WTC11 (cell line): ENCODE measurements at regions of chr12 and their contacts with region 1.

Region 1: DNA sequence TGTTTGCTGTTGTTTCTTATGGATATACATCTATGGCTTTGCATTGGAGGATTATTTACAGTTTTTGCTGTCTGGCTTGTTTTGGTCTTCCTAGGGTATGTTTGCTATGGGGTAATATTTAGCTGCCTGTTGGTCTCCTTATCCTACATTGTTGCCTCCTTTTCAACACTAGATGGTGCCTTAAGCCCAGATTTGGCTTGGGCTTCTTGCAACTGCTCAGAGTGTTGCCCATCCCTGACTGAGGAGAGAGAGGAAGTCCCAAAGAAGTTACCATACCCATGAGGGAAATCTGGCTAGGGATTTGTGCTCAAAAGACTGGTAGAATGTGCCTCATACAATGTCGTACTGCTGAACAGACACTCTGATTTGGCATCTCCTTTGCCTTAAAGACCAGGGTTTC is 94.6 kb upstream of the MUCL1 start:
- DNase-seq: peak; percentile 43
- ATAC-seq: peak; percentile 99
- H3K4me3 Mint-ChIP-seq: no peak overlapping the region
- H3K27ac Mint-ChIP-seq: no peak overlapping the region
- H3K4me1 Mint-ChIP-seq: no peaks in the 10 kb centered on the region
- H3K27me3 Mint-ChIP-seq: no peaks in the 10 kb centered on the region
- CTCF ChIP-seq: no peak

Region 2: DNA sequence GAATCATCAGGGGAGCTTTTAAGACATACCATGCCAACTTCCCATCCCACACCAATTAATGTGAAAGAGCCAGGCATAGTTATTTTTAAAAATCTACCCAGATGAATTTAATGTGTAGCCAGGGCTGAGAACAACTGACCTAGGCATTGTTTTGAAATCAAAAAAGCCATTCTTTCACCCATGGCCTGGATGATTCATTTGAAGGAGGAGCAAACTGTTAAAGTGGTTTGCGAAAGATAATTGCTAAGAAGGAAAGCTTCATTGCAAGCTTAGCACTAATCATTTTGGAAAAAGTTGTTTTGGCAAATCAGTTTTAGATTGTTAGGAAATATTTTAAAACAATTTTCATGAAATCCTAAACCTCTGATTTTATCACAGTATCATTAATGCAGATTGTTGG is 284.2 kb before region 1 on chr12:
- CTCF ChIA-PET with region 1: no interaction called
- POLR2A ChIA-PET with region 1: no interaction called
- DNase-seq: no peak
- ATAC-seq: no peak
- H3K4me3 Mint-ChIP-seq: no peak overlapping the region
- H3K27ac Mint-ChIP-seq: no peak overlapping the region
- H3K4me1 Mint-ChIP-seq: peaks cover 13% of the 10 kb centered on the region
- H3K27me3 Mint-ChIP-seq: peaks cover 29% of the 10 kb centered on the region
- CTCF ChIP-seq: no peak

Region 3: DNA sequence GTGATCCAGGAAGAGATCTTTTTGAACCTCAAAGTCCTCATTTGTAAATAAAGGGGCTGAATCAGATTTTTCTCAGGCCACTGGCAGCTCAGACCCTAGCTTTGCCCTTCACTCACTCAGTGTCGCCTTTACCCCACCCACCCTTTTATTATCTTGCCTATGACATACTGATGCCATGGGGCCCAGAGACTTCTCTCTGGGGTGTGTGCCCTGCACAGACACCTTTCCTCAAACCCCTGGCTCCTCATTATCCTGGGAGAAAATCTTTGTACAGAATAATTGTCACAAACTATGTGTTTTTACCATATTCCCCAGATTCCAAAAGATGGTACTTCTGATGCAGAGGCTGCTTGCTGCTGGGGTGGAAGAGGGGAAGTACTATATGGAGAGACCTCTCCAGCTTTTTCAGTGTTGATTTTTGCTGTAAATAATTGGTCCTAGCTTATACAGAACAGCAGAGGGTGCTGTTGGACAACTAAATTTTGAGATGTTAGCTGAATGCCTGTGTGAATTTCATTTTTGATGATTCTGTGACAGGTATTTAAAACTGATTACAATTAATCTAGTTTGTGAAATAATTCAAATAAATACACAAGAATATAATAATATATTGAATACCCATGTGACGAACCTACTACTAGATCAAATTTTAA is 57.7 kb before region 1 on chr12:
- CTCF ChIA-PET with region 1: interaction called, 21 read pairs
- POLR2A ChIA-PET with region 1: no interaction called
- DNase-seq: no peak
- ATAC-seq: peak; percentile 69
- H3K4me3 Mint-ChIP-seq: no peak overlapping the region
- H3K27ac Mint-ChIP-seq: no peak overlapping the region
- H3K4me1 Mint-ChIP-seq: peaks cover 22% of the 10 kb centered on the region
- H3K27me3 Mint-ChIP-seq: no peaks in the 10 kb centered on the region
- CTCF ChIP-seq: peak; percentile 43

Region 4: GRCh38 chr12:54723379-54724256 is 36.1 kb before region 1 on chr12:
- CTCF ChIA-PET with region 1: interaction called, 12 read pairs
- POLR2A ChIA-PET with region 1: no interaction called
- DNase-seq: no peak
- ATAC-seq: peak; percentile 51
- H3K4me3 Mint-ChIP-seq: no peak overlapping the region
- H3K27ac Mint-ChIP-seq: no peak overlapping the region
- H3K4me1 Mint-ChIP-seq: peaks cover 41% of the 10 kb centered on the region
- H3K27me3 Mint-ChIP-seq: no peaks in the 10 kb centered on the region
- CTCF ChIP-seq: peak; percentile 53

Region 5: DNA sequence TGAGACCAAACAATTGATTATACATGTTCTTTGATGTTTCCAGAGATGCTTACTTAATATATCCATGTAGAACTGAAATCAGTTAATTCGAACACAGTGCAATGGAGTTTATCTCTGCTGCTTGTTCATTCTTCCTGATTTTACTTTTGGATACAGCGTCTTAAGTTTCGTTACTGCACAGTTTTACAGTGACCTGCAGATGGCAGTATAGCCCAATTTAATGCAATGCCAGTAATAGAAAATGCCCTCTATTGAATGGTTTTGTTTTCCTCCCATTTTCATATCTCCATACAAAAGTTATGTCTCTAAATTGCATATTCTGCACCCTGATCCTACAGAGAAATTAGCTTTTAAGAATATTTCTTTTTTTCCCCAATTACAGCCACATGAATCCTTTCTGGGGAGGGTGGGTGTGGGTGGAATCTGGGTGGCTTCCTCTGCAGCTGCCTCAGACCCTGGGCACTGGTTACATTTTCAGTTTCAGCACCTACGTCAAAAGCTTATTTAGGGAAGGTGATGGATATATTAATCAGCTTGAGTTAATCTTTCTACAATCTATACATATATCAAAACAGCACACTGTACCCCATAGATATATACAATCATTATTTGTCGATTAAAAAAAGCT is 10.4 kb before region 1 on chr12:
- CTCF ChIA-PET with region 1: interaction called, 18 read pairs
- POLR2A ChIA-PET with region 1: no interaction called
- DNase-seq: no peak
- ATAC-seq: peak; percentile 53; the same call in 1 of the 2 replicates
- H3K4me3 Mint-ChIP-seq: no peak overlapping the region
- H3K27ac Mint-ChIP-seq: no peak overlapping the region
- H3K4me1 Mint-ChIP-seq: no peaks in the 10 kb centered on the region
- H3K27me3 Mint-ChIP-seq: no peaks in the 10 kb centered on the region
- CTCF ChIP-seq: peak; percentile 56

Region 6: DNA sequence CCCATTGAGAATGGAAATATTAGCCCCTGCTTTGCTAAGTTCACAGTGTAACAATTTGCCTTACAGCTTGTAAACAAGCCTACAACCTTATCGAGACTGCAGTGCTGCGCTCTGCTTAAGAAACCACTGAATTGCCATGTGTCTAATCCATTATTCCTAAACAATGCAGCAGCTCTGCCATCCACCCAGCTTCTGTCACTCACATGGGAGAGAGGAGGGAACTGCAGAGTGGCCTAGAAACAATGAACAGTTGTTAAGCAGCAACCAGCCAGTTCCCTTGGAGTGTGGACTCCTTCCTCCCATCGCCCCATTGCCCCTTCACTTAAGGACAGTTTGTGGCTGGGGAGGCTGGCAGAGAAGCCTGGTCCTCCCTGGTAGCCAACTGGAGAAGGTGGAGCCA is 181.9 kb after region 1 on chr12:
- CTCF ChIA-PET with region 1: no interaction called
- POLR2A ChIA-PET with region 1: no interaction called
- DNase-seq: no peak
- ATAC-seq: no peak; the same call in 1 of the 2 replicates
- H3K4me3 Mint-ChIP-seq: no peak overlapping the region
- H3K27ac Mint-ChIP-seq: no peak overlapping the region
- H3K4me1 Mint-ChIP-seq: peaks cover 16% of the 10 kb centered on the region
- H3K27me3 Mint-ChIP-seq: peaks cover 7% of the 10 kb centered on the region; the same call in 1 of the 2 replicates
- CTCF ChIP-seq: no peak

Region 7: GRCh38 chr12:54958048-54958658 is 198.4 kb after region 1 on chr12:
- CTCF ChIA-PET with region 1: interaction called, 37 read pairs
- POLR2A ChIA-PET with region 1: no interaction called
- DNase-seq: peak; percentile 33
- ATAC-seq: no peak; the same call in 1 of the 2 replicates
- H3K4me3 Mint-ChIP-seq: no peak overlapping the region
- H3K27ac Mint-ChIP-seq: no peak overlapping the region
- H3K4me1 Mint-ChIP-seq: peaks cover 24% of the 10 kb centered on the region
- H3K27me3 Mint-ChIP-seq: peaks cover 4% of the 10 kb centered on the region; the same call in 1 of the 2 replicates
- CTCF ChIP-seq: peak; percentile 29; the same call in 1 of the 2 replicates

Region 8: DNA sequence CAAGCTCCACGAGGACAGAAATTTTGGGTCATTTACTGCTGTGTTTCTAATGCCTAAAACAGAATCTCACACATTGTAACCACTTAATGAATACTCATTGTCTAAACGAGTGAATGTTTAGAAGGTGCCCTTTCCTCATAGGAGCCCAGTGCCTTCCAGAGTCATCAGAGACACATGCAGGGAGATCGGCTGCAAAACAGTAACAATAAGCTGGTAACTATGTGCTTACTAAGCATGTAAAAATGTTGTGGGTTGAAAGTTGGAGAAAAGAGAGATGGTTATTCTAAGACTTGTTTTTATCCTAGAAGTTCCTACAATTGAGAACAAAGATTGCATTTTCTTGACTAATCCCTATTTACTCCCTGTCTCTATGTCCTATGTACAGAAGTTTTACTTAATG is 217.4 kb after region 1 on chr12:
- CTCF ChIA-PET with region 1: interaction called, 11 read pairs
- POLR2A ChIA-PET with region 1: no interaction called
- DNase-seq: no peak
- ATAC-seq: no peak
- H3K4me3 Mint-ChIP-seq: no peak overlapping the region
- H3K27ac Mint-ChIP-seq: no peak overlapping the region
- H3K4me1 Mint-ChIP-seq: peaks cover 18% of the 10 kb centered on the region
- H3K27me3 Mint-ChIP-seq: no peaks in the 10 kb centered on the region
- CTCF ChIP-seq: no peak

Region 9: GRCh38 chr12:54993161-54993835 is 233.5 kb after region 1 on chr12:
- CTCF ChIA-PET with region 1: interaction called, 16 read pairs
- POLR2A ChIA-PET with region 1: no interaction called
- DNase-seq: peak; percentile 41
- ATAC-seq: peak; percentile 76
- H3K4me3 Mint-ChIP-seq: no peak overlapping the region
- H3K27ac Mint-ChIP-seq: no peak overlapping the region
- H3K4me1 Mint-ChIP-seq: peaks cover 26% of the 10 kb centered on the region
- H3K27me3 Mint-ChIP-seq: no peaks in the 10 kb centered on the region
- CTCF ChIP-seq: peak; percentile 75; the same call in 1 of the 2 replicates